ENCODE measurements at regions of chr5 and their contacts with region 1.

Region 1: DNA sequence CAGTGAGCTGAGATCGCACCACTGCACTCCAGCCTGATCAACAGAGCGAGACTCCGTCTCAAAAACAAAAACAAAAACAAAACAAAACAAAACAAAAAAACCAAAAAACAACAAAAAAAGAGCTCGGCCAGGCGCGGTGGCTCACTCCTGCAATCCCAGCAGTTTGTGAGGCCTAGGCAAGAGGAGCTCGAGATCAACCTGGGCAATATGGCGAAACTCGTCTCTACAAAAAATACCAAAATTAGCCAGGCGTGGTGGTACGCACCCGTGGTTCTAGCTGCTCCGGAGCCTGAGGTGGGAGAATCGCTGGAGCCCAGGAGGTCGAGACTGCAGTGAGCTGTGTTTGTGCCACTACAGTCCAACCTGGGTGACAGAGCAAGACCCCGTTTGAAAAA is 20.1 kb downstream of the TRIM7 start:
- DNase-seq: no peak
- H3K4me3 Mint-ChIP-seq: peak overlapping the region; percentile 86
- H3K27ac Mint-ChIP-seq: peak overlapping the region; percentile 94
- H3K4me1 Mint-ChIP-seq: peaks cover 52% of the 10 kb centered on the region
- H3K27me3 Mint-ChIP-seq: peaks cover 14% of the 10 kb centered on the region

Region 2: GRCh38 chr5:181173420-181174342 is 11.2 kb before region 1 on chr5:
- CTCF ChIA-PET with region 1: interaction called, 50 read pairs
- POLR2A ChIA-PET with region 1: interaction called, 14 read pairs
- DNase-seq: peak; percentile 72
- H3K4me3 Mint-ChIP-seq: peak overlapping the region; percentile 78
- H3K27ac Mint-ChIP-seq: peak overlapping the region; percentile 80
- H3K4me1 Mint-ChIP-seq: peaks cover 46% of the 10 kb centered on the region
- H3K27me3 Mint-ChIP-seq: peaks cover 54% of the 10 kb centered on the region

Region 3: GRCh38 chr5:181207214-181208107 is 22.6 kb after region 1 on chr5:
- CTCF ChIA-PET with region 1: interaction called, 28 read pairs
- POLR2A ChIA-PET with region 1: interaction called, 149 read pairs
- DNase-seq: peak; percentile 80
- H3K4me3 Mint-ChIP-seq: peak overlapping the region; percentile 81
- H3K27ac Mint-ChIP-seq: peak overlapping the region; percentile 85
- H3K4me1 Mint-ChIP-seq: peaks cover 37% of the 10 kb centered on the region
- H3K27me3 Mint-ChIP-seq: peaks cover 32% of the 10 kb centered on the region

Region 4: DNA sequence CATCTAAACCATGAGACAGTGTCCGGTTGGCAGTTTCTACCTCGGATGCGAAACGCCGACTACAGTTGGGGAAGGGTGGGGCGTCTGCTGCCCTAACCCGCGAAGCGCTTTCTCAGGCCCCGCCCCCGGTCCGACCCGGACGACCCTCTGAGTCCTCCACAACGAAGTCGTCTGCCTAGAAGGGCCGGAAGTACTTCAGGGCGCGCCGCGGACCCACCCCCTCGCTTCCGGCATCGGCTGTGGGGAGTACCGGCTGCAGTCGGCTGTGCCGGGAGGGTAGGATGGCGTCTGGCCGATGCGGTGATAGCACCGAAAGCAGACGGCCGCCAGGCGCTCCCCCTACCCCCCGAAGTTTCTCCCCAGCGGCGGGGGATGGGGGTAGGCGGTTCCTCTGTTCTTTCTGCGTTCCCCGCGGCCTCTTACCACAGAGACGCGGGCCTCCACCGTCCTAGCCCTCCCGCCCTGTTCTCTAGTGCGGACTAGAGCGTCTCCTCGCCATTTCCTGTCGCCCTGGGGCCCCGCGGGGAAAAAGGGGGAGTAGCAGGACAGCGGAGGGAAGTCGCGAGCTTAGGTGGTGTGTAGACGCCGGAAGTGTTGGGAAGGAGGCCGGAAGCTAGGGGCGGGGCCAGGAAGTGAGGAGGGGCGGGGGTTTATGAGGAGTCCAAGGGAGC is 38.3 kb after region 1 on chr5 and contains the start of gene TRIM41:
- CTCF ChIA-PET with region 1: interaction called, 11 read pairs
- POLR2A ChIA-PET with region 1: interaction called, 100 read pairs
- DNase-seq: peak; percentile 98
- H3K4me3 Mint-ChIP-seq: peak within 1 kb of the TSS; percentile 99
- H3K27ac Mint-ChIP-seq: peak within 1 kb of the TSS; percentile 100
- H3K4me1 Mint-ChIP-seq: peaks cover 69% of the 10 kb centered on the region
- H3K27me3 Mint-ChIP-seq: peaks cover 4% of the 10 kb centered on the region
- total RNA-seq, gene TRIM41: 42.4 to 43.7 TPM

Region 5: GRCh38 chr5:181243512-181244343 is 58.9 kb after region 1 on chr5 and contains the start of gene RACK1:
- CTCF ChIA-PET with region 1: interaction called, 5 read pairs
- POLR2A ChIA-PET with region 1: interaction called, 76 read pairs
- DNase-seq: peak; percentile 91
- H3K4me3 Mint-ChIP-seq: peak within 1 kb of the TSS; percentile 97
- H3K27ac Mint-ChIP-seq: peak within 1 kb of the TSS; percentile 92
- H3K4me1 Mint-ChIP-seq: peaks cover 67% of the 10 kb centered on the region
- H3K27me3 Mint-ChIP-seq: no peaks in the 10 kb centered on the region
- total RNA-seq, gene RACK1: 1,749 to 1,772 TPM